ENCODE measurements at regions of chr4 and their contacts with region 1.

Region 1: DNA sequence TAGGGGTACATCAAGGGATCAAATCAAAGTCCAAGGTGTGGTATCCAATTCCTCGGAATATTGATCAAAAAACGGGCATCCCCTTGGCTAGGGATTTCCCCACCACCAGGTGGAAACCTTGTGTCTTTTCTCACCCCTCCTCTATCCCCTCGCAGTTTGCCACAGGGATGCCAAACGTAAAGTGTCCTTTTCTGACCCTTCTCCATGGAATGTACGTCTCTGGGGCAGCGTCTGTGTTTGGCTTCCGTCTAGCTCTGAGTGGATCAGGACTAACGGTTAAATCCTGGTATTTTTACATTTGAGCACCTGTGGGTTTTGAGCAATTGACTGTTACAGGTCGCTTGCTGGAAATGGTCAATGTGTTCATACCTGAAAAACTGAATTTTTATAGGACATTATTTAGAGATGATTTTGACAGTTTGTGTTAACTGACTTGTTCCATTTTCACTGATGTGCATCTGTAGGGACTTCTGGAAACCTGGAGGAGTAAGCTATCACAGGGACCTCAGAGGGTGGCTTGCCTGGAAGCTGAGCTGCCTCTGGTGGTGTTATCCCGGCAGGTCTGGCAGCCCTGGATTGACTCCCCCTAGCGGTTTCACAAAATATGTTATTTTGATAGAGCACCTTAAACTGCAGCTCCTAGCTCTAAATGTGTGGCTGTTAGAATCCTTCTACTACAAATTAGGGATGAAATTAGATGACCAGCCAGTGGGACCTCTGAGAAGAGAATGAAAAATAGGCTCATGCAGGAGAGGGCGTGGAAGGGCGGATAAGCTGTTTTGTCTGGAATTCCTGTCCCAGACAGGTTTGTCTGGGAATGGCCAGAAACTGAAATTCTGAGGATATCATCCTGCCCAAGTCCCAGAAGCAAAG is 8.8 kb upstream of the MGST2 start:
- DNase-seq: peak; percentile 59
- H3K4me3 Mint-ChIP-seq: no peak overlapping the region
- H3K27ac Mint-ChIP-seq: no peak overlapping the region
- H3K4me1 Mint-ChIP-seq: peaks cover 25% of the 10 kb centered on the region
- H3K27me3 Mint-ChIP-seq: no peaks in the 10 kb centered on the region
- CTCF ChIP-seq: peak; percentile 47

Region 2: DNA sequence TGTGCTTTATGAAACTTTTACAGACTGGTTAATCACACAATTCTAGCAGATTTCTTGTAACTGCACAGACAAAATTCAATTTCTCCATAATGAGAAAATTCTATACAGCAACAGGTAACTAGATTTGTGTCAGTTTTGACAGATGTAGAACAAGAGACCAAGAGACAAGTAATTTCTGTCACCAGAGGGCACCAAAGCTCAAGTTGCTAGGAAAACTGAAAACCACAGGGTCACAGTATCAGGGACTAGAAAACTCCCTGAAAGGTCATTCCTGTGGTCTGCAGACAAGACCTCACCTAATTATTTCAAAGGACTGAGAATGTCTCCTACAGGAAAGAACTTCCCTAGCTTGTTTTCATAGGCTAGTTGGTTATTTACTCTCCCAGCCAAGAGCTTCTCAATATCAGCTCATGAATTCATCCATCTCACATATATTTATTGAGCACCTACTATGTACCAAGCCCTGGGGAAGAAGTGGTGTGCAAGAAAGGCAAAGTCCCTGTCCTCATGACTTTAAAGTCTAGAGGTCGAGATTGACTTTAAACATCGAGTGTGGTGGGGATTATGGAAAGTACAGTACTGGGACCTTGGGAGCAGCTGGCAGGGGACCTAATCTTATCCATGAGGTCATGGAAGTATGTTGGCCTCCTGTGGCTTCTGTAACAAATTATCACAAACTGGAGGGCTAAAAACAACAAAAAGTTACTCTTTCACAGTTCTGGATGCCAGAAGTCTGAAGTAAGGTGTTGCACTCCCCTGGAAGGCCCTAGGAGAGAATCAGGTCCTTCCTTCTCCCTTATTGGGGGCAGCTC is 53.1 kb before region 1 on chr4:
- CTCF ChIA-PET with region 1: interaction called, 17 read pairs
- intact Hi-C with region 1: no loop called
- DNase-seq: peak; percentile 51
- H3K4me3 Mint-ChIP-seq: no peak overlapping the region
- H3K27ac Mint-ChIP-seq: no peak overlapping the region
- H3K4me1 Mint-ChIP-seq: peaks cover 12% of the 10 kb centered on the region
- H3K27me3 Mint-ChIP-seq: peaks cover 18% of the 10 kb centered on the region
- CTCF ChIP-seq: peak; percentile 28

Region 3: GRCh38 chr4:139704915-139705485 is 48.1 kb after region 1 on chr4:
- CTCF ChIA-PET with region 1: interaction called, 5 read pairs
- intact Hi-C with region 1: loop called (anchors 5 kb)
- DNase-seq: no peak
- H3K4me3 Mint-ChIP-seq: no peak overlapping the region
- H3K27ac Mint-ChIP-seq: no peak overlapping the region
- H3K4me1 Mint-ChIP-seq: no peaks in the 10 kb centered on the region
- H3K27me3 Mint-ChIP-seq: no peaks in the 10 kb centered on the region
- CTCF ChIP-seq: no peak

Region 4: DNA sequence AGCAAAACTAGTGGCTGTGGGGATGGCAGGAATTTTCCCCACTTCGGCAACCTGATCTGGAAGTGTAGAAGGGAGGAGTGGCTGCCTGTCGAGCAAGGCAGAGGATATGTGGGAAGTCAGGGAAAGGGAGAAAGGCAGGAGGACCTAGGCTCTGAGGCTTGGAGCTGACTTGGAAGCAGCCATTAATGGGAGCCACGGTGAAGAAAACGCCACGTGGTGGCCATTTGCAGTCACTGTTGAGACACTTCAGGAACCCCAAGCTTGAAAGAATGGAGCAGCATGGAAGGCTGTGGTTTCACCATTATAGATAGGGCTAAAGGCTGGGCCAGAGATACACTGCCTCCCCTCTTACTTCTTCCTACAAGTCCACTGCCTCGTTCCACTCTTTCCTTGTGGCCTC is 539.0 kb after region 1 on chr4:
- CTCF ChIA-PET with region 1: no interaction called
- intact Hi-C with region 1: no loop called
- DNase-seq: no peak
- H3K4me3 Mint-ChIP-seq: no peak overlapping the region
- H3K27ac Mint-ChIP-seq: no peak overlapping the region
- H3K4me1 Mint-ChIP-seq: no peaks in the 10 kb centered on the region
- H3K27me3 Mint-ChIP-seq: no peaks in the 10 kb centered on the region
- CTCF ChIP-seq: no peak

Region 5: GRCh38 chr4:140281828-140282552 is 625.1 kb after region 1 on chr4:
- CTCF ChIA-PET with region 1: no interaction called
- intact Hi-C with region 1: loop called (anchors 5 kb)
- DNase-seq: no peak
- H3K4me3 Mint-ChIP-seq: no peak overlapping the region
- H3K27ac Mint-ChIP-seq: no peak overlapping the region
- H3K4me1 Mint-ChIP-seq: no peaks in the 10 kb centered on the region
- H3K27me3 Mint-ChIP-seq: peaks cover 38% of the 10 kb centered on the region
- CTCF ChIP-seq: no peak